HAP-1 (cell line): ENCODE measurements at regions of chr12 and their contacts with region 1.

Region 1: DNA sequence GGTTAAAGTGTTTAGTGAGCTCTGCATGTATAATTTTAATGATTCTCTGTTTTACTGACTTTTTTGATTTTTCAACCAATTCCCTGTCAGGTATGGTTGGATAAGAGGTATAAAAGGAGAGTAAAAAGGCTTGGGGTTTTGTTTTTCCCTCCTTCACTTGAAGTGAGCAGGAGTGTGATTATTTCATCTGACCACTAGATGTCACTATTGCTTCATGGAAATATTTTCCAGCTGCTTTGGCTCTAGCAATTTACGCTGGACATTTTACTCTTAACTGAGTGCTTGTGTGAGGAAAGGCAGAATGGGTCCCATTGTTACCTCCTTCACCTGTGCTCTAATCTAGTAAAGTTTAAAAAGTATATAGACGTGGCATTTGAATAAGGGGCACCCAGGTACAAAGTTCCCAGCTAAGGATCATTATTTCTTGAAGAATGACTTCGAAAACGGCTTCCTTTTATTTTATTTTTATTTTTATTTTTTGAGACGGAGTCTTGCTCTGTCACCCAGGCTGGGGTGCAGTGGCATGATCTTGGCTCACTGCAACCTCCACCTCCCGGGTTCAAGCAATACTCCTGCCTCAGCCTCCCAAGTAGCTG is 66.5 kb downstream of the TBC1D30 start:
- DNase-seq: peak; percentile 8 to 64
- H3K4me3 ChIP-seq: no peak overlapping the region
- H3K4me1 ChIP-seq: peaks cover 16% of the 10 kb centered on the region
- H3K27me3 ChIP-seq: peaks cover 3% of the 10 kb centered on the region; the same call in 1 of the 2 replicates

Region 2: DNA sequence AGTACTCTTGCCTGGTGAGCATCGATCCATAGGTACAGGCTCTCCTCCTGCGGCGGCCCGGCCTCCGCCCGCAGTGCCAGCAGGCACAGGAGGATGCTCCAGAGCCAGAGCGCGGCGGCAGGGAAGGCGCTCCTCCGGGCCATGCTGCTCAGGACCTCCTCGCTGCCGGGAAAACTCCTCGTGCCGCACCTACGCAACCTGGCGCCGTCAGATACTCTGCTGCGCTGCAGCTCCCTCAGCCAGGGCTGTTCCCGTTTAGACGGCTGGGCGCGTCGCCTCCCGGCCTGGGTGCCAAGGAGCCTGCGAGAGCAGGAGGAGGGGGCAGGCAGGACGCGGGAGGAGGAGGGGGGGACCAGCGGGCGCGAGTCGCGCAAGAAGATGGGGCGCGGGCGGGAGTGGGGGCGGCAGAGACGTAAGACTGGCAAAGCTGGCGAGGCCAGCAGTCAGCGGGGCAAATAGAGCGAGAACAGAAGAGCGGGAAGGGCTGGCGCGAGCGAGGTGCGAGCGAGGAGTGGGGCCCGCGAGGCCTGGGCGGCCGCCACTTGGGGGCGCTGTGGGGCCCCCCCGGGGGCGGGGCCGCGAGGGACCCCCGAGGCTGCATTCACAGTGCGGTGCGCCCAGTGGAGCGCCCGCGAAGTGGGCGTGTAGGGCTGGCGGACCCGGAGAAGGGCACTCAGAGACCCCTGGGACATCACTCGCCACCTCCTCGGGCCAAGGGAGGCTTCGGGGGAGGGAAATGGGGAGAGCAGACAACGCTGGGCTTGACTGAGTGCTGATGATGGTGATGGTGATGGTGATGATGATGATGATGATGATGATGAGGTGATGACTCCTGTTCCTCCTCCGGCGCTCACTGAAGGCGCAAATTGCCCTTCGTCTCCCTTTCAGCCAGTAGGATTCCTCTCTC is 230.3 kb after region 1 on chr12 and contains the start of gene WIF1:
- in situ Hi-C with region 1: loop called (anchors 5 kb)
- DNase-seq: no peak
- H3K4me3 ChIP-seq: no peak within 1 kb of the TSS
- H3K4me1 ChIP-seq: peaks cover 28% of the 10 kb centered on the region
- H3K27me3 ChIP-seq: peaks cover 18% of the 10 kb centered on the region